Esophagus squamous epithelium (tissue), 5 donors: ENCODE measurements at regions of chr3 and their contacts with region 1.

Region 1: DNA sequence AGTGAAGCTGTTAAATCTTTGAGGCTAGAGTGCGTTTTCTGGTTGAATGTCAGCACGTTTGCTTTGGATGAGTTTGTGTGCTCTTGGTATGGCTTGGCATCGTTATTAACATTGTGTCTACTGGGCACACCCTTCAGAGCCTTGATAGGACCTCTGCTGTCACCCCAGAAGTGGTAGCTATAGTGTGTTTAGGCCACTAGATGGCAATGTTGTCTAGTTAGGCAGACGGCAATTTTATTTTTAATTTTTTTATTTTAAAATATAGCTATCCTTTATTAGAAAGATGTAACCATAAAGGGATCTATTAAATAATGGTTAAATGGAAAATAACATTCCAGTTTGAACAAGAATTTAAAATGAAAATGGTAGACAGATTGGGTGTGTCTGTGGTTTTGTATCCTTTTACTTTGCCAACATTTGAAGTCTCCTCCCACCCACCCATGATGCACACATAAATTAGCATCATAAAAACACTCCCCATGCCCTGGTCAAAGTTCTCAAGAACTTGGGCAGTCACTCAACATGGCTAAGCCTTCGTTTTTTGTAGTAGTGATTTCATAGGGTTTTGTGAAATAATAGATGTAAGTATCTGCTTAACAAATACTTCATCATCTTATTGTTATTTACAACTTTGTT is 200.7 kb downstream of the KCNH8 start:
- DNase-seq: no peak
- H3K4me3 ChIP-seq: no peak overlapping the region
- H3K27ac ChIP-seq: no peak overlapping the region
- H3K4me1 ChIP-seq: no peaks in the 10 kb centered on the region
- H3K27me3 ChIP-seq: no peaks in the 10 kb centered on the region
- CTCF ChIP-seq: peak in 5 of 6 experiments; percentile 21 to 61 (median 47)
- POLR2A ChIP-seq: no peak

Region 2: DNA sequence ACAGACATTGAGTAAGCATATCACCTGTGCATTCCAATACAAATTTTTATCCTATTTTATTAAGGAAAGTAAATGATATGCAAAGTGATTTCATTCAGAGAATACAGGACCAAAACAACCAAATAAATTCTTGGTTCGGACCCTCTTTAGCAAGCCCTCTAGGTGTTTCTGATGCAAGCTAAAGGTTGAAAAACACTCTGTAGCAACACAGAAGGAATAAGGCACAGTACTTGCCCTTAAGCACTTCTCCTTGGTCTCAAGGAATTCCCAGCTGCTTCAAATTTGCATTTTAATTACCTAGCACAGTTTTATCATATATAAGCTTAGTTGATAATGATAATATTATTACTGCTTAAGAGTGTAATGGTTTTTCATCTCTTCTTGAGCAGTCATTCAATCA is 87.7 kb after region 1 on chr3:
- intact Hi-C with region 1: no loop called
- DNase-seq: no peak
- H3K4me3 ChIP-seq: no peak overlapping the region
- H3K27ac ChIP-seq: no peak overlapping the region
- H3K4me1 ChIP-seq: no peaks in the 10 kb centered on the region
- H3K27me3 ChIP-seq: no peaks in the 10 kb centered on the region
- CTCF ChIP-seq: no peak
- POLR2A ChIP-seq: no peak

Region 3: DNA sequence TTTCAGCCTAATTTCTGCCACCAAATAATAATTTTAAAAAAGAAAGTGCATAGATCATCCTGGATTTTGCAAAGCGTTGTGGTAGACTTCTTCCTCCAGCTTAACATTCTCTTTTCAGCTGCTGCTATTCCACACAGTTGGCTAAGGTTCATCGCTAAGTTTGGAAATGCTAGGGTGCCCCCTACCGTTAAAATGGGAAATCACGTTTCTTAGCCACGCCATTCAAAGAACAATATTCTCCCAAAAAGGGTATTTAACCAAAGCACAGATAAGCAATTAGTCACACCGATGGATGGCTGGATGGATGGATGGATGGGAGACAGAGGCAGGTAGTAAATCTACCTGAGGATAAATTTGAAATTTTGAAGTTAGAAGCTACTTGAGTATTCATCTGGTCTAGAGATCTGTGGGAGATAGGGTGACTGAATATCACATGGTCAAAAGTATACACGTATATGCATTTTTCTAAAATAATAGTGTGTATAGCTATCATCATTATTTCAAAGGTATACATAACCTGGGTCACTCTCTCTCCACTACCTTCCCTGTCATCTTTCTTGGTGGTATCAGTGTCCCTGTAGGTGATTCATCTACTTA is 517.8 kb after region 1 on chr3:
- intact Hi-C with region 1: loop called (anchors 10 kb)
- DNase-seq: no peak
- H3K4me3 ChIP-seq: no peak overlapping the region
- H3K27ac ChIP-seq: no peak overlapping the region
- H3K4me1 ChIP-seq: no peaks in the 10 kb centered on the region
- H3K27me3 ChIP-seq: no peaks in the 10 kb centered on the region
- CTCF ChIP-seq: peak; percentile 56 to 74 (median 60)
- POLR2A ChIP-seq: no peak